ENCODE measurements at regions of chr17 and their contacts with region 1.

Region 1: DNA sequence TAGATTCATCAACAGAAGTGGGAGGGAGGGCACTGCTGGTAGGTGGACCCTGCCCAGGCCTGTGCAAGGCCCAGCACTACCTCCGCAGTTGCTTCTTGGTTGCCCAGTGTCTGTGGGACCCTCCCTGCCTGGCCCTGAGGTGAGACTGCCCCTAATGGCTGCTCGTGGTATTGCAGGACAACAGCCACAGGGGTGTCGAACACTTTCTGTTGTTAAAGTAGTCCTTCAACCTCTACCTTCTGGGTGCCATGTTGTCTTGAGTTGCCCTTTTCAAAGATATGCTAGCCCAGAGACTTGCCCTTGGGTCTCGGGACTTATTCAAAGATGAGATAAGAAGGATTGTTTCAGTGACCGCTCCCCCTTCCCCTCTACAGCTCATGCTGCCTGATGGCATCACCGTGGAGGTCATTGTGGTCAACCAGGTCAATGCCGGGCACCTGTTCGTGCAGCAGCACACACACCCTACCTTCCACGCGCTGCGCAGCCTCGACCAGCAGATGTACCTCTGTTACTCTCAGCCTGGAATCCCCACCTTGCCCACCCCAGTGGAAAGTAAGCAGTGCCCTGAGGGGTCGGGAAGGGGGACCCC is 29.1 kb downstream of the AKAP1 start:
- DNase-seq: no peak
- H3K4me3 ChIP-seq: no peak overlapping the region
- H3K27ac ChIP-seq: no peak overlapping the region
- H3K4me1 ChIP-seq: peaks cover 18% of the 10 kb centered on the region
- H3K27me3 ChIP-seq: no peaks in the 10 kb centered on the region
- CTCF ChIP-seq: peak in 2 of 3 experiments; percentile 49 to 54
- POLR2A ChIP-seq: no peak

Region 2: GRCh38 chr17:57009737-57010445 is 104.3 kb before region 1 on chr17:
- intact Hi-C with region 1: loop called (anchors 10 kb)
- DNase-seq: no peak
- H3K4me3 ChIP-seq: no peak overlapping the region
- H3K27ac ChIP-seq: no peak overlapping the region
- H3K4me1 ChIP-seq: no peaks in the 10 kb centered on the region
- H3K27me3 ChIP-seq: no peaks in the 10 kb centered on the region
- CTCF ChIP-seq: peak; percentile 23 to 46 (median 46)
- POLR2A ChIP-seq: no peak

Region 3: DNA sequence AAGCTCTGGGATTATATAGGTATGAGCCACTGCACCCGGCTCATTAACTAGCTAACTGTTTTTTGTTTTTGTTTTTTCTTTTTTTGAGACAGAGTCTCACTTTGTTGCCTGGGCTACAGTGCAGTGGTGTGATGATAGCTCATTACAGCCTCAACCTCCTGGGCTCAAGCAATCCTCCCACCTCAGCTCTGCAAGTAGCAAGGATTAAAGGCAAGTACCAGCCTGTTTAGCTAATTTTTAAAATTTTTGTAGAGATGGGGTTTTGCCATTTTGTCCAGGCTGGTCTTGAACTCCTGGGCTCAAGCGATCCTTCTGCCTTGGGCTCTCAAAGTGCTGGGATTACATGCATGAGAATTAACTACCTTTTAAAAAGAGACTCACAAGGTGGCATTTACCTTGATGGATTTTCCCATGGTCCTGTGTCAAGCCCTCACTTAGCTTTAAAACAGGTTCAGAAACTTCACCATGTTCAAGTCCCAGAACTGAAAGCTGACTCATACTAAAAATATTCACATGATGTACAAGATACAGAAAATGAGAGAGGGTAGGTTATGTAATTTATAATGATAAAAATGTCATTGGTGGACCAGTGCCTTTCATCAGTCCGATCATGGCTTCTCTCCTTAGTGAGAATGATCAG is 33.6 kb before region 1 on chr17:
- intact Hi-C with region 1: no loop called
- DNase-seq: no peak
- H3K4me3 ChIP-seq: no peak overlapping the region
- H3K27ac ChIP-seq: no peak overlapping the region
- H3K4me1 ChIP-seq: peaks cover 4% of the 10 kb centered on the region
- H3K27me3 ChIP-seq: no peaks in the 10 kb centered on the region
- CTCF ChIP-seq: no peak
- POLR2A ChIP-seq: no peak

Region 4: GRCh38 chr17:57535249-57535966 is 421.2 kb after region 1 on chr17:
- intact Hi-C with region 1: loop called (anchors 10 kb)
- DNase-seq: no peak
- H3K4me3 ChIP-seq: no peak overlapping the region
- H3K27ac ChIP-seq: no peak overlapping the region
- H3K4me1 ChIP-seq: peaks cover 21% of the 10 kb centered on the region
- H3K27me3 ChIP-seq: no peaks in the 10 kb centered on the region
- CTCF ChIP-seq: no peak
- POLR2A ChIP-seq: no peak

Measured in vagina (tissue), 2 donors.